Right ventricle myocardium inferior (tissue), 1 donor: ENCODE measurements at regions of chr18 and their contacts with region 1.

Region 1: DNA sequence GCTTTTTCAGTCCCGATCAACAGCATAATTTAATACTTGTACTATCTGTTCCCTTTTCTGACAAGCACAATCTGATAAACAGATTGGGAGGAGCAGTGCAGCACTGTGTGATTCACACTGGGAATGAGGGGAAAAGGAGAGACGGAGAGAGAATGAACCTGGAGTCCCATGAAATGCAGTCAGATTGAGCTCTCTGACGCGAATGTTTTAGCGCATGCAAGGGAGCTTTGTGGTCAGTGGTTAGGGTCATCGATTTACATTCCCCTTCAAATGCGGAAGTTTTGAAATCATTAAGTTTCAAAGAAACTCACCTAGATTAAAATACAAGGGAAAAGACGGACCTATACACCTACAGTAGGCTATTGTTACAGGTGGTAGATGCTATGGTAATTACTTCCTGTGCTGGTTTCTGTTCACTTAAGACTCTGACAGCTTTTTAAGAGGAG is 99.6 kb downstream of the KCTD1 start:
- DNase-seq: no peak
- ATAC-seq: no peak

Region 2: DNA sequence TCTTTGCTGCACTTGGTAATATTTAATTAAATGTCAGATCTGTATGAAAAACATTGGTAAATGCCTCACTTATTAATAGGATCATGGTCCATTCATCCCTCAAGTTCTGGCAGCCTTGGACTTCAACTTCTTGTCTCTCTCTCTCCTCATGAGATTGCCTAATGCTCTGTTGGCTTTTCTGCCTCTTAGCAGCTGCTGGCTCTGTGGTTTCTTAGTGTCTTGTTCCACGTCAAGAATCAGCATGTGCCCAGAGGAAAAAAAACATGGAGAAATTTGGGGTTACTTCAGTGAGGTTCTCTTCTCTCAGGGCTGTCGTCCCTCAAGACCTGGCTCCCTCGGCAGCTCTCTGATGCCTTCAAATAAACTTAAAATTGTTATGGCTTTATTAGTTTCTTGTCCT is 147.1 kb before region 1 on chr18:
- intact Hi-C with region 1: no loop called
- DNase-seq: no peak
- ATAC-seq: no peak

Region 3: DNA sequence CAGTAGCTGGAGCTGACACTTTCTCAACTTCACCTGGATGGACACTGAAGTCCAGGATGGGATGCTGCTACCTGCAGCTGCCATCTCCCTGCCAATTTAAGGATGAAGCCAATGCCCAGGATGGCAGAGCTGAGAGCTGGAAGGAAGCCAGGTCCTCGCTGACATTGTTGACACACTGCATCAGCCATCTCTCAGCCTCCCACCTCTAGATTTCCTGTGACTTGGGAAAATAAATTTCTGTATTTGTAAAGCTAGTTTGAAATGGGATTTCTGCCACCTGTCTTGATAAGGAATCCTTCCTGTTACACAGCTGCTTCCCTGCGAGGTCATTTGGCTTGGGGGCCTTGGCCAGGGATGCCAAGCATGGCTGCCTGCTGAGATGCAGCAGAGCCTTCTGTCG is 56.1 kb after region 1 on chr18:
- intact Hi-C with region 1: loop called (anchors 5 kb)
- DNase-seq: no peak
- ATAC-seq: no peak

Region 4: DNA sequence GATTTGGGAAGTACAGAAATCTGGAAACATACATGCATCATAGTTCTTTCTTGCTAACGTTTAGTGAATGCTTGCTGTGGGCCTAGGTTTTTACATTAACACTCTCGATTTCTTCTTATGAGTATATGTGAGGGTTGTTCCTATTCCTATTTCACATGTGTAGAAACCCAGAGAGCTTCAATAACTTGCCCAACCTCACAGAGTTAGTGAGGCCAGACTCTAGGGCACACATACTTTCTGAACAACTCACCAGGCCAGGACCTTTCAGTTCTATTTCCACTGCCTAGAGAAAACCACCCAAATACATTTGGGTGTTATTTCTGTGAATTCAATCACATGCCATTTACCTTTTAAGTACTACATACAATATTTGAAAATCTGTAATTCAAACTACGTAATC is 107.8 kb after region 1 on chr18:
- intact Hi-C with region 1: no loop called
- DNase-seq: no peak
- ATAC-seq: no peak

Region 5: GRCh38 chr18:27109451-27109850 is 660.7 kb after region 1 on chr18:
- intact Hi-C with region 1: no loop called
- DNase-seq: peak; percentile 11
- ATAC-seq: peak; percentile 87

Region 6: DNA sequence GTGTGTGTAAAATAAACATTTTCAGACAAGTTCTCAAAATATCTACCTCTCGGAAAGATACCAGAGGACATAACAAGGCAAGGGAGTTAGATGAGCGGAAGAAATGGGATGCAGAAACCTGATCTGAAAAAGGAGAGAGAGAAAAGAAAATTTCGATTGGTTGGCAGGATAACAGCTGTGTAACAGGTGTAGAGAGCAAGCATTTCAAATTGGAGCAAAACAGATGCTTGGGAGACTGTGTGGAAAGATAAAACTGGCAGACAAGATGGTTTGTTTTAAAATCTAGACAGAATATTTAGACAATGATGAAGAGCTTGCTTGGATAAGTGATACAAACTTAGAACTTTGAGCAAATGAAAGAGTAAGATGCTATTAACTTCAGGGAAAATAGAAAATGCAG is 716.2 kb after region 1 on chr18:
- intact Hi-C with region 1: no loop called
- DNase-seq: no peak
- ATAC-seq: no peak